ENCODE measurements at regions of chr3 and their contacts with region 1.

Region 1: DNA sequence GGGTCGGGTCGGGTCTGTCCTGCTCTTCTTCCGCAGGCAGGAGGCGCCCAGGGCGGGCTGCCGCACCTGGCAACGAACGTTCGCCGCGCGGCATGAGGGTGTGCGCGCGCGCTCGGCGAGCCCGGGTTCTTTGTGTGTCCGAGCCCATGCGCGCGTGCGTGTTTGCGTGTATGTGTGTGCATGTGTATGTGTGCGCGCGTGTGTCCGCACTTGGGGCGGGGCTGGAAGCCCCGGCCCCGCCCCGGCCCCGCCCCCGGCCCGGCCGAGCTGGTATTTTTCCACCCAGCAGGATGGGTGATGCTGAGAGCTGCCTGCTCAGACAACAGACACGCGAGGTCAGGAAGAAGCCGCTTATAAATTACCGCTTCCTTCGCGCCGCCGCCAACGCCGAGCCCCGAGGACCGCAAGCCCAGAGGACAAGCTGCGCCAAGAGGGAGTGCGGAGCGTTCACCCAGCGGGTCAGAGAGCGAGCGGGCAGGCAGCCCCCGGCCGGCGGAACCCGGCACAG is at the start of gene SLC6A6:
- DNase-seq: peak; percentile 91
- ATAC-seq: peak; percentile 77 to 85 (median 80)
- H3K4me3 ChIP-seq: peak within 1 kb of the TSS; percentile 52 to 87 (median 72)
- H3K27ac ChIP-seq: peak within 1 kb of the TSS; percentile 58 to 94 (median 87)
- H3K4me1 ChIP-seq: peaks cover 14 to 69% (median 29%) of the 10 kb centered on the region in 9 donors
- H3K27me3 ChIP-seq: peaks cover 0 to 17% (median 0%) of the 10 kb centered on the region in 7 donors
- CTCF ChIP-seq: peak in 7 of 9 donors; percentile 14 to 58 (median 42)
- total RNA-seq, gene SLC6A6: 11.4 to 68.7 (median 44.0) TPM

Region 2: GRCh38 chr3:13308380-13308801 is 1094.0 kb before region 1 on chr3:
- intact Hi-C with region 1: no loop called
- DNase-seq: no peak
- ATAC-seq: peak in 1 of 8 donors; percentile 44
- H3K4me3 ChIP-seq: no peak overlapping the region
- H3K27ac ChIP-seq: no peak overlapping the region
- H3K4me1 ChIP-seq: no peaks in the 10 kb centered on the region
- H3K27me3 ChIP-seq: no peaks in the 10 kb centered on the region
- CTCF ChIP-seq: peak in 8 of 9 donors; percentile 13 to 52 (median 42)

Region 3: GRCh38 chr3:14261229-14261628 is 141.1 kb before region 1 on chr3:
- intact Hi-C with region 1: loop called in 1 of 10 experiments (anchors 10 kb)
- DNase-seq: peak; percentile 81 to 84
- ATAC-seq: peak; percentile 71 to 94 (median 87)
- H3K4me3 ChIP-seq: no peak overlapping the region
- H3K27ac ChIP-seq: no peak overlapping the region
- H3K4me1 ChIP-seq: peaks cover 0 to 14% (median 4%) of the 10 kb centered on the region in 9 donors
- H3K27me3 ChIP-seq: peaks cover 0 to 50% (median 14%) of the 10 kb centered on the region in 7 donors
- CTCF ChIP-seq: peak; percentile 95 to 99 (median 97)

Region 4: GRCh38 chr3:14301558-14301957 is 100.8 kb before region 1 on chr3:
- intact Hi-C with region 1: loop called in 1 of 10 experiments (anchors 5 kb)
- DNase-seq: no peak
- ATAC-seq: no peak
- H3K4me3 ChIP-seq: no peak overlapping the region
- H3K27ac ChIP-seq: no peak overlapping the region
- H3K4me1 ChIP-seq: peaks cover 4 to 39% (median 14%) of the 10 kb centered on the region in 9 donors
- H3K27me3 ChIP-seq: peaks cover 0 to 63% (median 23%) of the 10 kb centered on the region in 7 donors
- CTCF ChIP-seq: no peak

Region 5: GRCh38 chr3:14439579-14440518 is 37.5 kb after region 1 on chr3:
- intact Hi-C with region 1: loop called in 1 of 10 experiments (anchors 5 kb)
- DNase-seq: peak; percentile 80 to 86
- ATAC-seq: peak; percentile 14 to 64 (median 48)
- H3K4me3 ChIP-seq: peak overlapping the region in 1 of 10 donors; percentile 4
- H3K27ac ChIP-seq: peak overlapping the region in 8 of 10 donors; percentile 4 to 71 (median 38)
- H3K4me1 ChIP-seq: peaks cover 40 to 83% (median 75%) of the 10 kb centered on the region in 9 donors
- H3K27me3 ChIP-seq: peaks cover 0 to 39% (median 7%) of the 10 kb centered on the region in 7 donors
- CTCF ChIP-seq: no peak

Region 6: GRCh38 chr3:14452679-14453367 is 50.5 kb after region 1 on chr3:
- intact Hi-C with region 1: loop called in 3 of 10 experiments (anchors 2 to 5 kb)
- DNase-seq: peak; percentile 87 to 96
- ATAC-seq: peak; percentile 83 to 95 (median 92)
- H3K4me3 ChIP-seq: no peak overlapping the region
- H3K27ac ChIP-seq: peak overlapping the region; percentile 14 to 87 (median 76)
- H3K4me1 ChIP-seq: peaks cover 27 to 58% (median 38%) of the 10 kb centered on the region in 9 donors
- H3K27me3 ChIP-seq: peaks cover 0 to 42% (median under 1%) of the 10 kb centered on the region in 7 donors
- CTCF ChIP-seq: peak in 6 of 9 donors; percentile 18 to 41 (median 26)

Region 7: DNA sequence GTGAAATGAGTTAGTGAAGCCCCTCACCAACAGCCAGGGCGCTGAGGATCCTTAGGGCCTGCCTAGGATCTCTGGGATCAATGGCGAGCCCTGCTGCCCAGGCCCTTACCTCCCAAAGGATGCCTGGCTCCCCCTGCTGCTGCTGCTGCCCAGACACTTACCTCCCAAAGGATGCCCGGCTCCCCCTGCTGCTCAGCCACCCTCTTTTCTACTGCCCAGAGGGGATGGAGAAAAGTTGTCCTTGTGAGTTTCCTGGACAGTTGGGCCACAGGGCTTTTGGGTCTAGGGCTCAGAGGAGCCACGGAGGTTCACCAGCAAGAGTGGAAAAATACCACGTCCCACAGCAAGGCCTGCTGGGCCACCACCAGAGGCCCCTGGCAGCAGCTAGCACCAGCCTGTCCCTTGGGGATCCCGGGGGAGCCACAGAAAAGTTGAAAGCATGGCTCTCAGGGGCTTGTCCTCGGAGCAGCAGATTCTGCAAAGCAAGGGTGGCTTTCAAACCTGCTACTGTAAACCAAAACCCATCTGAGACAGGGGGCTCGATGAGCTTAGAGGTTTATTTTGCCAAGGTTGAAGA is 59.5 kb after region 1 on chr3:
- intact Hi-C with region 1: loop called in 5 of 10 experiments (anchors 5 kb)
- DNase-seq: peak; percentile 51 to 59
- ATAC-seq: peak in 6 of 8 donors; percentile 35 to 74 (median 60)
- H3K4me3 ChIP-seq: no peak overlapping the region
- H3K27ac ChIP-seq: no peak overlapping the region
- H3K4me1 ChIP-seq: peaks cover 2 to 42% (median 25%) of the 10 kb centered on the region in 9 donors
- H3K27me3 ChIP-seq: peaks cover 0 to 37% (median 4%) of the 10 kb centered on the region in 7 donors
- CTCF ChIP-seq: peak in 8 of 9 donors; percentile 22 to 72 (median 55)

Region 8: DNA sequence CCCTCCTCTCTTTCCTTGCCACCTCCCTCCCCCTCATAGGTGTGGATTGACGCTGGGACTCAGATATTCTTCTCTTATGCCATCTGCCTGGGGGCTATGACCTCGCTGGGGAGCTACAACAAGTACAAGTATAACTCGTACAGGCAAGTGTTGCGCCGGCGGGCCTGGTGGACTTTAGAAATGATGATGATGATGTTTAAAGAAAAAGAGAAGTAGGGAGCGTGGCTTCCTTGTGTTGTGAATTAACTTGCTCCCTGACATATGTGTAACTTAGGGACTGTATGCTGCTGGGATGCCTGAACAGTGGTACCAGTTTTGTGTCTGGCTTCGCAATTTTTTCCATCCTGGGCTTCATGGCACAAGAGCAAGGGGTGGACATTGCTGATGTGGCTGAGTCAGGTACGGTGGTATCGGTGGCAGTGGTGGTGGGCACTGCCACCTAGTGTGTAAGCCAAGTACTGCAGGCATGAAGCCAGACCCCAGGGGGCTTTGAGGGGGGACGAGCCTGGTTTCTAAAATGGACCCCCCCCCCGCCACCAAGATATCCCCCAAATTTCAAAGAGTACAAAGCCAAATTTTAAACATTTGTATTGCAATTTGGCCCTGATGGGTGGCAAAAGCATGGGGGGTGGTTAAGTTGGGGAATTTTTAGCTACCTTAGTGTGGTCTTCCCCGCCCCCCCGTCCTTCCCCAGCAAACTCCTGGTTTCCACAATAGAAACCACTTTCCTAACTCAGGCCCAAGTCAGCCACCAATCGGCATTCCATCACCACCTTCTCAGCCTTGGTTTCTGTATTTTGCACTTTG is 65.7 kb after region 1 on chr3:
- intact Hi-C with region 1: loop called in 5 of 10 experiments (anchors 5 kb)
- DNase-seq: peak in 1 of 2 donors; percentile 40
- ATAC-seq: peak in 7 of 8 donors; percentile 44 to 78 (median 57)
- H3K4me3 ChIP-seq: no peak overlapping the region
- H3K27ac ChIP-seq: no peak overlapping the region
- H3K4me1 ChIP-seq: peaks cover 0 to 26% (median 2%) of the 10 kb centered on the region in 9 donors
- H3K27me3 ChIP-seq: peaks cover 0 to 28% (median 0%) of the 10 kb centered on the region in 7 donors
- CTCF ChIP-seq: peak; percentile 84 to 93 (median 88)

Measured in heart right ventricle (tissue), 16 donors.